Spleen (tissue), 13 donors: ENCODE measurements at regions of chr11 and their contacts with region 1.

Region 1: DNA sequence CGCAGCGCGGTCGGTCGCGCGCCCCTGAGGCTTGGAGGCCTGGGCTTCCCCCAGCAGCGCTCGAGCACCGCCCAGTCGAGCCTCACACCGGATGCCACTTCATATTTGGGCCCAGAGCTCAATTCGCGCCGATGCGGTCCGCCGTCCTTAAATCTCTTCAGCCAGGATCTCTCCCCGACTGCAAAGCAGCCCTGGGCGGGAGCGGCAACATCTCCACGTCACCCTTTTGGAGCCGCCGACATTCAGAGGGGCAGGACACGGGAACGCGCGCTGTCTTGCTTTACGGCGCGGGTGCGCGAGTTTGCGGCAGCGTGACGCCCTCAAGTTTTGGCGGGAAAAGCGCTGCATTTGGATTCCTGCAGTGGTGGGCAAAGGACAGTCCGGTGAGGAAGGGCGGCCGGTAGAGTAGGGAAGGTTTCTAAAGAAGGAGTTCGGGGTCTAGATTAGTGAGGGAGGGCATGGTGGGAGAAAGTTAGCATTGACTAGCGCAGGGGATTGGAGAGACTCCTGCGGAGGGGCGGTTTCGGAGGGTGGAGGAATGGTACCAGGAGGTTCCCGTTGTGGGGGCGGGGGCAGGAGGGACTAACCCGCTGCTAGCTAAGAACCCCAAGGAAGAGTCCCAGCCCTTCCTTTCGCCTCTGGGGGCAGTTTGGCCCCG is 796 bp downstream of the CHEK1 start:
- DNase-seq: peak; percentile 95
- H3K4me3 ChIP-seq: peak overlapping the region; percentile 52 to 88 (median 76)
- H3K27ac ChIP-seq: peak overlapping the region; percentile 88 to 98 (median 96)
- H3K4me1 ChIP-seq: peaks cover 10 to 26% (median 19%) of the 10 kb centered on the region in 6 donors
- H3K27me3 ChIP-seq: no peaks in the 10 kb centered on the region
- CTCF ChIP-seq: peak in 1 of 11 experiments; percentile 17
- POLR2A ChIP-seq: no peak

Region 2: GRCh38 chr11:125874556-125875124 is 248.9 kb after region 1 on chr11:
- intact Hi-C with region 1: loop called (anchors 10 kb)
- DNase-seq: no peak
- H3K4me3 ChIP-seq: no peak overlapping the region
- H3K27ac ChIP-seq: no peak overlapping the region
- H3K4me1 ChIP-seq: no peaks in the 10 kb centered on the region
- H3K27me3 ChIP-seq: no peaks in the 10 kb centered on the region
- CTCF ChIP-seq: peak; percentile 44 to 78 (median 70)
- POLR2A ChIP-seq: no peak